Activated CD4-positive, alpha-beta T cell treated with anti-CD3 and anti-CD28 coated beads for 36 hours (primary cell): ENCODE measurements at regions of chr20 and their contacts with region 1.

Region 1: GRCh38 chr20:35146920-35147574 is at the start of gene EDEM2:
- DNase-seq: peak; percentile 97
- ATAC-seq: peak; percentile 92
- H3K4me3 Mint-ChIP-seq: peak within 1 kb of the TSS; percentile 97
- H3K27ac Mint-ChIP-seq: peak within 1 kb of the TSS; percentile 95
- H3K4me1 Mint-ChIP-seq: peaks cover 29% of the 10 kb centered on the region
- H3K27me3 Mint-ChIP-seq: no peaks in the 10 kb centered on the region
- total RNA-seq, gene EDEM2: 16.5 to 18.2 TPM

Region 2: DNA sequence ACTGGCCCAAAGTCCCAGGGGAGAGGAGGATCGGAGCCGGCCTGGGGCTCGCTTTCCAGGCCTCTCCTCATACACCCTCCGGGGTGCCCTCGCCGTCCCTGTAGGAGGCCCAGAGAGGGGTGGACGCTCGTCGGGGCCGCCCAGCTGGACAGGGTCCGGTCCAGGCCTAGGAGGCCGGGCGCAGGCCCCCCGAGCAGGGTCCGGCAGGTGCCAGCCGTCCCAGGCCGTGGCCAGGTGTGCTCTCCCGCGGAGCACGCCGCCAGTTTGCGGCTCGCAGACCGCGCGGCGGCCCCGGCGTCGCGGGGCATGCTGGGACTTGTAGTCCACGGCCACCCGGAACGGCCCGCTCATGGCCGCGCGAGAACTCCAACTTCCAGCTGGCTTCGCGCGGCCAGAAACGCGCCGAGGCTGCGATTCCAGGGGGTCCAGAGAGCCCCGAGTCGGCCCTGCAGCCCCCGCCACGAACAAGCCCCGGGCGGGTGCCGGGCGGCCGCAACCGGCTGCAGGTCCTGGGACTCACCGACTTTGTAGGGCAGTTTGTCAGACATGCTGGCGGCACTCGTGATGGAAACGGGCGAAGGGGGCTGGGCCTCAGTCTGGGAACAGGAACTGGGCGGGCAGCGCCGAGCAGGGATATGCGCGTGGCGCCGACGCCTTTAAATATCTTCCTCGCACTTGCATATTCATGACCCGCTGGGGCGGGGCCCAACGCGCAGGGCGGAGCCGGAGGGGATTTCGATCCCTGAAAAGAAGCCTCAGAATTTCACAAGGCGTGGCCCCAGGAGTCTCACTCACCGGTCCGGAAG is 844.1 kb before region 1 on chr20 and contains the start of gene AHCY:
- CTCF ChIA-PET with region 1: no interaction called
- POLR2A ChIA-PET with region 1: no interaction called
- intact Hi-C with region 1: loop called in 1 of 2 experiments (anchors 1 kb)
- DNase-seq: peak; percentile 97
- ATAC-seq: peak; percentile 96
- H3K4me3 Mint-ChIP-seq: peak within 1 kb of the TSS; percentile 90
- H3K27ac Mint-ChIP-seq: peak within 1 kb of the TSS; percentile 91
- H3K4me1 Mint-ChIP-seq: peaks cover 18% of the 10 kb centered on the region
- H3K27me3 Mint-ChIP-seq: no peaks in the 10 kb centered on the region
- total RNA-seq, gene AHCY: 183 to 189 TPM

Region 3: DNA sequence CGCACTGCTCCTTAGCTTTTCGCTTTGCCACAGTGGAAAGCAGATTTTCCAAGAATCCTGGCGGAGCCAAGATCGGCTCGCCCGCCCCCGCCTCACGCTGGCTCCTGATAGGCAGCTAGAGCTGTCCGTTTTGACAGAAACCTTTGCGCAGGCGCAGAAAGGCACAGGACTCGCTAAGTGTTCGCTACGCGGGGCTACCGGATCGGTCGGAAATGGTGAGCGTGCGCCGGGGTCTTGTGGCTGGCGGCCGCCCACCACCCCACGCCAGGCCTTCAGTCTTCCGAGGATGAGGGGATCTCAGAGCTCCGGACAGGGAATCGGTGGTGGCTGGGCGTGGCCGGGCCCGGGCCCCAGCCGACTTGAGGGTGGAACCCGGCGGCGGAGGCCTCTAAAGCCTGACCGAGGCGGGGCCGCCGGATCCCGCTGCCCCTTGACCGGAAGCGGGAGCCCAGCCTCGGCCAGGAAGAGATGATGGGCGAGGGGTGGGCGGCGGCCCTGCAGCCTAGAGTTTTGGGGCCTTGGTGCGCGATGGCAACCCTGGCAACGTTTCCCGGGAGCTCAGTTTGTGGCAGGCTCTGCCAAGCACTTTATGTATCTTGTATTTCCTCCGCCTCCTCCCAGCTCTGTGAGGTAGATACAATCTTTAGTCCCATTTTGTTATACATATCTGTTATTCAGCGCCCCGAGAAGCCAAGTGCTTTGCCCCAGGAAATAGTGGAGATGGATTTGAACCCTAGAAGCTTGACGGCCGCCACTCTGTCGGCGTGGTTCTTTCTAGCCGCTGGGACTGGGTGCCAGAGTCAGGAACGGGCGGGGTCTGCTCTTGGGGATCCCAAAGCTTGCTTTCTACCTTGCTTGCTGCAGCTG is 630.6 kb before region 1 on chr20 and contains the start of gene DYNLRB1:
- CTCF ChIA-PET with region 1: no interaction called
- POLR2A ChIA-PET with region 1: no interaction called
- intact Hi-C with region 1: loop called in 1 of 2 experiments (anchors 2 kb)
- DNase-seq: peak; percentile 98
- ATAC-seq: peak; percentile 81
- H3K4me3 Mint-ChIP-seq: peak within 1 kb of the TSS; percentile 97
- H3K27ac Mint-ChIP-seq: peak within 1 kb of the TSS; percentile 98
- H3K4me1 Mint-ChIP-seq: peaks cover 35% of the 10 kb centered on the region
- H3K27me3 Mint-ChIP-seq: no peaks in the 10 kb centered on the region
- total RNA-seq, gene DYNLRB1: 83.5 to 122 TPM

Region 4: DNA sequence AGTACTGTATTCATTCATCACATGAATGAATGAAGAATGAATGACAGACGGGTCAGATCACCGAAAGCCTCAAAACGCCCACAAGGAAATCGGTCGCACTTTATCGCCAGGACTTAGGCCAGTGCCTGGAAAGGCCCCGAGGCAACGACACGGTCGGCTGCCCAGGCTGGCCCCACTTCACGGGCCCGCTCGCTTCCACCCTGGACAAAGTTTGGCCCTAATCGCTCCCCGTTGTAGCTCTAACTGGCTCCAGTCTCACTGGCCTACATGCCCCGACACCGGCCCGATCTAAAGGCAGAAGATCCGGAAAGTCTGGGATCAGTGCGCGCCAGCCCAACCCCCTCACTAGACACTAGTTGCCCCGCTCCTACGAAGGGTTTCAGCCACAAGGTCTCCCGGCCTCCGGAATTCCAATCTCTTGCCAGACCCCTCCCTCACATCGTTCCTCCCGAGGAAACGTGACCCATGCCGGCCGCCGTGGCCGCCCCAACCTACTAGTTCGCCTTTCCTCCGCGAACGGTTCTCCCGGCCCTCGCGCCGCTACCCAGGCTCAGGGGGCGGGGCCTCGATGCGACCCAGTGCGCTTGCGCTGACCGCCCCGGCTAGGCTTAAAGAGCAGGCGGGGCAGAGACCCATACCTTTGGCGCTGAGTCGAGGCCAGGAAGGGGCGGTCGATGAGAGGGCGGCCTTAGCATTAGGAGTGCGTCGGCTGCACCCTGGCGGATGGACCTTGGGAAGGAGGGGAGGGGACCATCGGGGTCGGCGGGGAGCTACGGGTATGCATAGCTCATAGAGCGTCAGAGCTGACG is 191.6 kb before region 1 on chr20 and contains the starts of genes GSS and MYH7B:
- CTCF ChIA-PET with region 1: no interaction called
- POLR2A ChIA-PET with region 1: no interaction called
- intact Hi-C with region 1: loop called (anchors 1 to 2 kb)
- DNase-seq: peak; percentile 99
- ATAC-seq: peak; percentile 95
- H3K4me3 Mint-ChIP-seq: peak within 1 kb of the TSS; percentile 98
- H3K27ac Mint-ChIP-seq: peak within 1 kb of the TSS; percentile 94
- H3K4me1 Mint-ChIP-seq: peaks cover 16% of the 10 kb centered on the region
- H3K27me3 Mint-ChIP-seq: no peaks in the 10 kb centered on the region
- total RNA-seq, gene GSS: 58.7 to 59.5 TPM
- total RNA-seq, gene MYH7B: 0.23 to 0.40 TPM

Region 5: DNA sequence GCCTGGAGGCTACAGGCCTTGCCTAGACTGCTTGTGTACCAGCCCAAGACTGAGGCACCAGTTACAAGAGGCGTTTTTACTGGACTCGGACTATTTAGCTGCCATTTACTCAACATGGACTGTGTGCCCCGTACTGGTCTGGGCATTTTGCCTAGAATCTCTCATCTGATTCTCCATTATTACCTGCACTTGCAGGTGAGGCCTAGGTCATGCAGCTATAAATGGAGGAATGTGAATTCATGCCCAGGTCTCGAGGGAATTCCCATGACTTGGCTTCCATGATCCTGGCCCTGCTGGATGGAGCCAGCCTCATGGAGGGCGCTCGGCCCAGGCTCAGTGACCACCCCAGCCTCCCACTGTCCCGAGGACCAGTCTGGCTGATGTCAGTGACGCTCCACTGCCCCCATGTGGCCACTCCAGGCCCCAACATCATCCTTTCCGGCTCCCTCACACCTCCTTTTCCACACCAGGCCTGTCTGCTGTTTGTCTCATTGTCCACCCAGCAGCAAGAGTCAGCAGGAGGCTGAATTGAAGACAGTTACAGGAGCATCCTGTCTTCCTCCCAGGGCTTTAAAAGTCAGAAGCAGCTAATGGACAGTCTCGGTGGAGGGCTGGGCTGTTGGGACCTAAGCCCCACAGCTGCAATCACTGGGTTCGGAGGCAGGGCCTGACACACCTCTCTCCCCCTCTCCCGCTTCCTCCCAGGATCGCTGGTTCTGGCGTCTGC is 122.2 kb after region 1 on chr20:
- CTCF ChIA-PET with region 1: interaction called, 15 read pairs
- POLR2A ChIA-PET with region 1: interaction called, 4 read pairs
- intact Hi-C with region 1: loop called in 1 of 2 experiments (anchors 1 kb)
- DNase-seq: peak; percentile 74
- ATAC-seq: peak; percentile 82
- H3K4me3 Mint-ChIP-seq: no peak overlapping the region
- H3K27ac Mint-ChIP-seq: no peak overlapping the region
- H3K4me1 Mint-ChIP-seq: no peaks in the 10 kb centered on the region
- H3K27me3 Mint-ChIP-seq: no peaks in the 10 kb centered on the region

Region 6: DNA sequence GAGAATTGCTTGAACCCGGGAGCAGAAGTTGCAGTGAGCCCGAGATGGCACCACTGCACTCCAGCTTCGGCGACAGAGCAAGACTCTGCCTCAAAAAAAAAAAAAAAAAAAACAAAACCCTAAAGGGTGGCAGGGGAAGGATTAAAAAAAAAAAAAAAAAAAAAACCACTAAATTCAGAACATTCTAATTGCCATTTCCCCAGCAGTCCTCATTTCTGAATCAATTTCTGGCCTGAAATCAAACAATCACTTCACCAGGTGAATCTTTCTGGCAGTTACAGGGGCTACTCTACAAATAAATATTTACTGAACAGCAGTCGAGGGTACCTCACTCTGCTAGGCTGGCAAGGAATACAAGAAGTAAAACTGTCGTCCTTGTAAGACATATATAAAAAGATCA is 263.6 kb after region 1 on chr20:
- CTCF ChIA-PET with region 1: no interaction called
- POLR2A ChIA-PET with region 1: no interaction called
- intact Hi-C with region 1: loop called in 1 of 2 experiments (anchors 1 kb)
- DNase-seq: no peak
- ATAC-seq: no peak
- H3K4me3 Mint-ChIP-seq: peak overlapping the region; percentile 91
- H3K27ac Mint-ChIP-seq: peak overlapping the region; percentile 100
- H3K4me1 Mint-ChIP-seq: peaks cover 21% of the 10 kb centered on the region
- H3K27me3 Mint-ChIP-seq: no peaks in the 10 kb centered on the region

Region 7: GRCh38 chr20:36064658-36065426 is 917.8 kb after region 1 on chr20:
- CTCF ChIA-PET with region 1: no interaction called
- POLR2A ChIA-PET with region 1: no interaction called
- intact Hi-C with region 1: loop called in 1 of 2 experiments (anchors 1 kb)
- DNase-seq: peak; percentile 95
- ATAC-seq: peak; percentile 98
- H3K4me3 Mint-ChIP-seq: peak overlapping the region; percentile 76
- H3K27ac Mint-ChIP-seq: no peak overlapping the region
- H3K4me1 Mint-ChIP-seq: no peaks in the 10 kb centered on the region
- H3K27me3 Mint-ChIP-seq: peaks cover 8% of the 10 kb centered on the region